Activated B cell treated with CpG ODN at 0.5 μM for 24 hours (primary cell): ENCODE measurements at regions of chr19 and their contacts with region 1.

Region 1: GRCh38 chr19:35431145-35431807 is 16.8 kb upstream of the FFAR2 start:
- DNase-seq: no peak
- ATAC-seq: no peak
- H3K4me3 Mint-ChIP-seq: no peak overlapping the region
- H3K27ac Mint-ChIP-seq: no peak overlapping the region
- H3K4me1 Mint-ChIP-seq: peaks cover 5% of the 10 kb centered on the region
- H3K27me3 Mint-ChIP-seq: peaks cover 3% of the 10 kb centered on the region
- CTCF ChIP-seq: no peak

Region 2: GRCh38 chr19:35502751-35503150 is 71.5 kb after region 1 on chr19:
- CTCF ChIA-PET with region 1: no interaction called
- POLR2A ChIA-PET with region 1: interaction called, 17 read pairs
- intact Hi-C with region 1: no loop called
- DNase-seq: no peak
- ATAC-seq: no peak
- H3K4me3 Mint-ChIP-seq: no peak overlapping the region
- H3K27ac Mint-ChIP-seq: no peak overlapping the region
- H3K4me1 Mint-ChIP-seq: no peaks in the 10 kb centered on the region
- H3K27me3 Mint-ChIP-seq: peaks cover 35% of the 10 kb centered on the region
- CTCF ChIP-seq: no peak